Activated CD4-positive, alpha-beta memory T cell treated with anti-CD3 and anti-CD28 coated beads for 36 hours (primary cell): ENCODE measurements at regions of chr14 and their contacts with region 1.

Region 1: DNA sequence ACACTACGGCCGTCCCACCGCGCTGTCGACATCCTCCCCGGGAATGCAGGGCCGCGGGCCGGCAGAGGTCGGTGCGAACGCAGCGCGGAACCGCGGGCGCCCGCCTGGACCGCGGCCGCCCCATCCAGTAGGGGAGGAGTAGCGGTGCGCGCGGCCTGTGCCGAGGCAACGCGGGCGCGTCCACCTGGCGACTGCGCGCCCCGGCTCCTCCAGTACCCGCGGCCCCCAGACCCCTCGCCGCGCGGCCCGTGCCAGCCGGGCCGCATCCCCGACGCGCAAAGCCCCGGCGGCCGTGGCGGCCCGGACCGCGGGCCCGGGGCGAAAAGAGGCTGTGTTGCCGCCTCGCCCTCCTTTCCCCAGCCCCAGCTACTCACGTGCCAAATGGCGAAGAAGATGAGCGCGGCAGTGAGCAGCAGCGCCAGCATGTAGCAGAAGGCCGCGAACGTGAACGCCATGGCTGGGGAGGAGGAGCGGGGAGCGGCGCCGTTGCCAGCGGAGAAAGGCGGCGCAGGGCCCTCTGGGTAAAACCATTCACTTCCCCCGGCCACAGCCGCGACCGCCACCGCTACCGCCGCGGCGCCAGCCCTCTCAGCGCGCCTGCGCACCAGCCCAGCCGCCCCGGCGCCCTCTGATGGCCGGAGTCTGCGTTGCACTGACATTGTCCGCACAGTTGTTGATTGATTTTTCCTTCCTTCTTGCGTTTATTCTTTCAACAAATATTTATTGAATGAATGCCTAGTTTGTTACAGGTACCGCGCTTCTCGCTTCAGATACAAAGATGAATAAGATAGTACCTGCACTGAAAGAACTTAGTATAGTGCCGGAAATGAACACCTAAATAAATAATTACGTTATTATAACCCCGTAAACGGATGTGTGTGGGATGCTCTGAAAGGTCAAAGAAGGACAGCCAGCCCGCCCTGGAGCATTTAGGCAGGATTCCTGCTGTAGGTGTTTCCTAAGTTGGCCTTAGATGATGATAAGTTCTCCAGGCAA is at the start of gene CNIH1:
- DNase-seq: peak; percentile 95
- H3K4me3 Mint-ChIP-seq: peak within 1 kb of the TSS; percentile 88
- H3K27ac Mint-ChIP-seq: peak within 1 kb of the TSS; percentile 93
- H3K4me1 Mint-ChIP-seq: peaks cover 50% of the 10 kb centered on the region
- H3K27me3 Mint-ChIP-seq: no peaks in the 10 kb centered on the region
- total RNA-seq, gene CNIH1: 84.2 to 89.9 TPM

Region 2: GRCh38 chr14:54396493-54397335 is 44.5 kb before region 1 on chr14 and contains the start of gene CDKN3:
- CTCF ChIA-PET with region 1: interaction called, 6 read pairs
- POLR2A ChIA-PET with region 1: interaction called, 5 read pairs
- intact Hi-C with region 1: loop called (anchors 1 kb)
- DNase-seq: peak; percentile 99
- H3K4me3 Mint-ChIP-seq: peak within 1 kb of the TSS; percentile 88
- H3K27ac Mint-ChIP-seq: peak within 1 kb of the TSS; percentile 70
- H3K4me1 Mint-ChIP-seq: peaks cover 17% of the 10 kb centered on the region
- H3K27me3 Mint-ChIP-seq: no peaks in the 10 kb centered on the region
- total RNA-seq, gene CDKN3: 96.2 to 99.2 TPM

Region 3: GRCh38 chr14:54427871-54428270 is 13.3 kb before region 1 on chr14:
- CTCF ChIA-PET with region 1: interaction called, 3 read pairs
- POLR2A ChIA-PET with region 1: interaction called, 4 read pairs
- intact Hi-C with region 1: loop called (anchors 1 kb)
- DNase-seq: no peak
- H3K4me3 Mint-ChIP-seq: no peak overlapping the region
- H3K27ac Mint-ChIP-seq: no peak overlapping the region
- H3K4me1 Mint-ChIP-seq: peaks cover 37% of the 10 kb centered on the region
- H3K27me3 Mint-ChIP-seq: no peaks in the 10 kb centered on the region

Region 4: DNA sequence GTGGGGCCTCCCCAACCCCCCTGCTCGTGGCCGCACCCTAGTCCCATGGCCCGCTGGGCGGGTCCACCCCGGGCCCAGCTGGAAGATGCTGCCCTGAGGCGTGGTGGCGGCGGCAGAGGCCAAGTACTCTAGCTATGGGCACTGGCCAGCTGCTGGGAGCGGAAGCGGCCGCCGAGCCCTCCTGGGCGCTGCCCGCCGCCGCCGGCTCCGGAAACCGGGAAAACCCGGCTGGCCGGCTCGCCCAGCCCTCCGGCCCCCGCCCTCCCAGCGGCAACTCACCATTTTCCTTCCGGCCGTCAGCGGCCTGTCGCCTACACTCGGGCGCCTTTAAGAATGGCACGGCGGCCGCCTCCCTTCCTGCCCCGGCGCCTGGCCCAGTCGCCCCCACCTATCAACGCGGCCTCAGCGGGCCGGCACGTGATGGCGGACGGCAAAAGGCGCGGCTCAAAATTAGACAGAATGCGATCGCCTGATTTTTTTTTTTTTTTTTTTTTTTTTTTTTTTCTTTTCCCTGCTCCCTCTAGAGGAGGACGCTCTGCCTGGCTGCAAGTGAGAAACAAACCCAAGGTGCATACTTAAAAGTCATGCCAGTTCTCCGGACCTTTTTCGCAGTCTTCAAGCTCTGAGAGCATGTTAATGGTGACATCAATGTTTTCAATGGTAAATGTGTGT is 47.6 kb after region 1 on chr14 and contains the start of gene GMFB:
- CTCF ChIA-PET with region 1: interaction called, 7 read pairs
- POLR2A ChIA-PET with region 1: no interaction called
- intact Hi-C with region 1: loop called (anchors 1 kb)
- DNase-seq: peak; percentile 94
- H3K4me3 Mint-ChIP-seq: peak within 1 kb of the TSS; percentile 89
- H3K27ac Mint-ChIP-seq: peak within 1 kb of the TSS; percentile 90
- H3K4me1 Mint-ChIP-seq: peaks cover 55% of the 10 kb centered on the region
- H3K27me3 Mint-ChIP-seq: no peaks in the 10 kb centered on the region
- total RNA-seq, gene GMFB: 39.0 to 43.6 TPM

Region 5: GRCh38 chr14:54509546-54510501 is 68.7 kb after region 1 on chr14 and contains the start of gene CGRRF1:
- CTCF ChIA-PET with region 1: interaction called, 4 read pairs
- POLR2A ChIA-PET with region 1: no interaction called
- intact Hi-C with region 1: loop called (anchors 1 kb)
- DNase-seq: peak; percentile 99
- H3K4me3 Mint-ChIP-seq: peak within 1 kb of the TSS; percentile 94
- H3K27ac Mint-ChIP-seq: peak within 1 kb of the TSS; percentile 76
- H3K4me1 Mint-ChIP-seq: peaks cover 39% of the 10 kb centered on the region
- H3K27me3 Mint-ChIP-seq: no peaks in the 10 kb centered on the region
- total RNA-seq, gene CGRRF1: 13.7 to 15.1 TPM

Region 6: DNA sequence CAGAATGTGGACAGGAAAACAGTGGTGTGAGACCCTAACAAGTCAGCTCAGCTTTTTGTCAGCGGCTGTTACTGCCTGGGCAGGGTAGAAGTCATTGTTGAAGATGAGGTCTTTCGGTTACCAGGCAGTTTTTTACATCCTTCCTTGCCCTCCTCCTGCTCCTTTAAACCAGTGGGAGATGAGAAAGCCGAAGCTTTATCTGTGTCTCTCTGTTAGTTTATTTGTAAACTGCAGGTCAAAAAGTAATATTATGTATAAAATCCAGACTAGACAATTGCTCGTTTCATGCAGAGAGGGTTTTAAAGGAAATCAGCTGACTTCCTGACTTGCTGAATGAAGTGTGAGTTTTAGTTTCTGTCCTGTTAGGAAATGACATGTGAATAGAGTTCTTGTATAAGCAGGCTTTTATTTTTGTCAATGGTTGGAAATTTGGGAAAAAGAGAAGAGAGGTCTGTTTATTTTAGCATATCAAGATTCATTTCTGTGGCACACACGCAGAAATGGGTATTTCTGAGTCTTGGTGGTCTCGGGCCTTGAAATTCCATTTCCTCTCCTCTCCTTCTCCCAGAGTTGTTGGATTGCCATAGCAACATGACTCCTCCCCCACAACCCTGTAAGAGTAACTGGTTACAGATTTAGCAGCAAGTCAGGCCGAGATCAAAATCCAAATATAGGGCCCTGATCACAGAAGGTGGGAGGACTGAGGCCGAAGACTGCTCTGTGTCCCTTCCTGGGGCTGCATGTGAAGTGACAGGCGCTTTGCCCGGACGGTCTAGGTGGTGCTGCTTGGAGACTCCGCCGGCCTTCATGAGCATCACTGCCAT is 186.6 kb after region 1 on chr14:
- CTCF ChIA-PET with region 1: no interaction called
- POLR2A ChIA-PET with region 1: no interaction called
- intact Hi-C with region 1: loop called (anchors 5 kb)
- DNase-seq: peak; percentile 49
- H3K4me3 Mint-ChIP-seq: peak overlapping the region; percentile 55
- H3K27ac Mint-ChIP-seq: peak overlapping the region; percentile 78
- H3K4me1 Mint-ChIP-seq: peaks cover 40% of the 10 kb centered on the region
- H3K27me3 Mint-ChIP-seq: no peaks in the 10 kb centered on the region

Region 7: DNA sequence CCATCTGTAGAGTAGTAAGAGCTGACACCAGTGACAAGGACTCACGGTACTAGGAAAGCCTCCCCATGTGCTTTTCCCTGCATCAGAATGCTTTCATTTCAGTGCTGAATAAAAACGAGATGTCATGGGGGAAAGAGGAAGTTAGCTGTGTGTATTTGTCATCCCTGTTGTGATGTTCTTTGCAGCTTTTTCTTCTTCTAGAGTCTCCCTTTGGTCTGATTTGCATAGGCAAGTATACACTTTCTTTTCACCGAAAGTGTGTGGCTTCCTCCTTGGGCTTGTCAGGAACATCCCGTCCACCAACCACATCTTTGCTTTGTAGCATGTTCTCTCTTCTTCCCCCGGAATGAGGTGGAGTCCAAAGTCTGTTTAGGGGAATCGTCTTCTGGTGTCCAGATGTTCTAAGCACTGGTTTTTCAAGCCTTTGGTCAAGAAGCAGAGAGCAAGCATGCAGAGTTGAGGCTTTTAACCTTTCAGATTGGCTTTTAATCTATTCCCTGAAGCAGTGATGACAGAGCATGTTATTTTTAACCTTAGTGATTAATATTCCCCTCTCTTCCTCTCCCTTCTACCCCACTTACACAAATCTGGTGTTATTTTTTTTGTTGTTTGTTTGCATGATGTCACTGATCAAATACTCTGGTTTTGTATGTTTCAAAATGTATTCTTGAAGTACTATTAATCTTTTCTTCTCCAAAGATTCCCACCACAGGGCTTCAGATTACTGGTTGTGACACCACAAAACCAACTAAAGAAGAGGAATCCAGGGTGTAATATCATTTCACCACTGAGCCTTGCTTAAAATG is 289.2 kb after region 1 on chr14:
- CTCF ChIA-PET with region 1: no interaction called
- POLR2A ChIA-PET with region 1: no interaction called
- intact Hi-C with region 1: loop called (anchors 5 kb)
- DNase-seq: peak; percentile 63
- H3K4me3 Mint-ChIP-seq: peak overlapping the region; percentile 38
- H3K27ac Mint-ChIP-seq: peak overlapping the region; percentile 90
- H3K4me1 Mint-ChIP-seq: peaks cover 38% of the 10 kb centered on the region
- H3K27me3 Mint-ChIP-seq: peaks cover 12% of the 10 kb centered on the region

Region 8: GRCh38 chr14:55389330-55389729 is 948.2 kb after region 1 on chr14:
- CTCF ChIA-PET with region 1: no interaction called
- POLR2A ChIA-PET with region 1: no interaction called
- intact Hi-C with region 1: no loop called
- DNase-seq: no peak
- H3K4me3 Mint-ChIP-seq: no peak overlapping the region
- H3K27ac Mint-ChIP-seq: peak overlapping the region; percentile 53
- H3K4me1 Mint-ChIP-seq: peaks cover 49% of the 10 kb centered on the region
- H3K27me3 Mint-ChIP-seq: no peaks in the 10 kb centered on the region